ENCODE measurements at regions of chr16 and their contacts with region 1.

Region 1: GRCh38 chr16:75251280-75252048 is at the start of gene BCAR1:
- DNase-seq: peak; percentile 93
- total RNA-seq, gene BCAR1: 48.7 to 104 TPM

Region 2: DNA sequence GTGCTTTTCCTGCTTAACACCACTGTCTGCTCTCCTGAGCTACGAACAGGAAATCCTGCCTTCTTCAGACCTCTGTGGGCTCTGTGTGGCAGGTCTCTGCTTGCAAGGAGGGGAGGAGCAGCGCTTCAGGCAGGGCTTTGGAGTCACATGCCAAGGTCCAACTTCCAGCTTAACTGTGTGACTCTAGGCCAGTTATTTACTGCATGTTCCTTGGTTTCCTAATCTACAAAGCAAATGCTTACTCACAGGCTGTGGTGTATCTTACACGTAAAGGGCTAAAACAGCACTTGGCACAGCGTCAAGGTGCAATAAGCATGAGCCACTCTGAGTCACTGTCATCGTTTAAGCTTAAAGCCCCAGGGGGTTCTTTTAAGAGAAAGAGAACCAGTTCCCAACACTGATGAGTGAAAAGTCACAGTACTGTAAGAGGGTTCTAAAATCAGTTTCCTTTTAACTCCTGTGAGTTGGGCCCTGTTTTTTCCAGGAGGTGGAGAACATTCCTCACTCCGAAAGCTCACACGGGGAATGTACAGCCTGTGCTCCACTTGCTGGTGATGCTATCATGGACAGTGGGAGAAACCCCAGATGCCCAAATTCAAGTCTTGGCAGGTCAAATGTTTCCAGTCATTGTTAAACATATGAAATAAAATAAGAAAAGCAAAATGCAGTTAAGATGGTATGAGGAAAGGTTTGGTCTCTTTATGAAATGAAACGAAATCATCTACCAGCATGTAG is 54.1 kb after region 1 on chr16:
- intact Hi-C with region 1: loop called in 1 of 2 experiments (anchors 10 kb)
- DNase-seq: peak; percentile 91

Region 3: GRCh38 chr16:75443298-75443697 is 191.8 kb after region 1 on chr16:
- intact Hi-C with region 1: no loop called
- DNase-seq: no peak